ENCODE measurements at regions of chr20 and their contacts with region 1.

Region 1: GRCh38 chr20:41317536-41318270 is at the start of gene ZHX3:
- DNase-seq: peak; percentile 97
- ATAC-seq: peak; percentile 98 to 99
- total RNA-seq, gene ZHX3: 32.8 to 34.2 TPM

Region 2: GRCh38 chr20:41232973-41233926 is 84.5 kb before region 1 on chr20:
- intact Hi-C with region 1: loop called in 1 of 2 experiments (anchors 5 kb)
- DNase-seq: no peak
- ATAC-seq: peak; percentile 8 to 69

Region 3: DNA sequence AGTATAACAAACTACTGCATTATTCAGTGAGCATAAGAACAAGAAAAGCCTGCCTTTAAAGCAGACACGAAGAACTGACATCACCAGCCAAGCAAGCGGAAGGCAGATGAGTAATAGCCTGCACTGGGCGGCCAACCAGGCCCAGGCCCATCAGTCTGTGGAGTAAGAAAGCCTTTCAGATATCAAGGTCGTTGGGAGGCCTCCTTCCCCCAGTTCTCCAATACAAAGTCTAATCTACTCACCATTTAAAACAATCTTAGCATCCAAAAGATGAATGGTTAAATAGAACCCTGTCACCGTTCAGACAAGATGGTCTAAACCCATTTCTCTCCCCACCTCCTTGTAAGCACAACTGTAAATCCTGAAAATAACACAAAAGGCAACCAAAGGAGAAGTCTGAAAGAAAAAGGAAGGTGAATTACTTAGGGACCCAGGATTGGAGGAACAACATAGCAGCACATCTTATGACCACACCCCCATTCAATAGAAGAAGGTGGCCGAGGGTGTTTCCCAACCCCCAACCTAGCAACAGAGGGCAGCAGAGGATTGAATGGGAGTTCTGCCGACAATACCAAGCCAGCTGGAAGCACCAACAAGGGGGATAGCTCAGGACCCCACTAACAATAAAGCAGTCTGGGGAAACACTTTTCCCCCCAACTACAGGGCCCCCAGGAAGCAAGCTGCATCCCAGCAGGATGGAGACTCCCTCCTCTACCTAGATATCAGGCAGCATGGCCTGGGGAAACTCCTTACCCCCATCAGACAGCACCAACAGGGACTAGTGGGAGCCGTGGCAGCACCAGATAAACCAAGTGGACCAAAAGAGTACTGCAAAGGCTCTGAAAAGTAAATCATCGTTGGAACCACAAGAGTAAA is 68.1 kb before region 1 on chr20:
- intact Hi-C with region 1: loop called in 1 of 2 experiments (anchors 10 kb)
- DNase-seq: peak; percentile 84
- ATAC-seq: peak; percentile 81 to 96

Measured in left cardiac atrium (tissue), 4 donors.